ENCODE measurements at regions of chr16 and their contacts with region 1.

Region 1: GRCh38 chr16:50326949-50327402 is 41.8 kb downstream of the BRD7 start:
- H3K4me3 ChIP-seq: no peak overlapping the region
- H3K27ac ChIP-seq: no peak overlapping the region
- H3K4me1 ChIP-seq: no peaks in the 10 kb centered on the region
- CTCF ChIP-seq: 0 out of 2 replicates have a peak, but pooled peaks have one; percentile 12

Region 2: DNA sequence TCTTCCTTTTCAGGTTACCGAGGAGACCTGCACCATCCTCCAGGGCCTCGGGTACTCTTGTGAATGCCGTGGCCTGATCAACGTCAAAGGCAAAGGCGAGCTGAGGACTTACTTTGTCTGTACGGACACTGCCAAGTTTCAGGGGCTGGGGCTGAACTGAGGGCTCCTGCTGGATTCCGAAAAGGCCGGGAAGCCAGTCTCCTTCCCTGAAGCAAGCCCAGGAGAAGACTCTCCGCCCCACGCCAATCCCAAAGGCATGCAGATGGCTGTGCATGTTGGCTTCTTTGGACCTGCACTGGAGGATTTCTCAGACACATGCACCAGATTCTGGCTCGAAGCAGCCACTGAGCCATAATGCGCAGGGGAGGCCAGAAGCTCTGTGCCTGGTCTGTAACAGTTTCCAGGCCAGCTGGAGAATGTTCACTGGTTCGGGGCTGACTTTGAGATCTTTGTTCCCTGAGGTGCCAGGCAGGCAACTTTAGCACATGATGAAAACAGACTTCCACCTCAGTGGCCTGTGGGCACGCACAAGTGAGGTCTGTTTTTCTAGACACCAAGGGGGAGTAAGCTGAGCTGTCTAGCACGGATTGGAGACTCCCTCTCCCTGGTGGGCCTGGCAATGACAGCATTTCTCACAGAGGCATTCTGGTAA is 11.5 kb before region 1 on chr16:
- CTCF ChIA-PET with region 1: interaction called, 14 read pairs
- POLR2A ChIA-PET with region 1: no interaction called
- H3K4me3 ChIP-seq: no peak overlapping the region
- H3K27ac ChIP-seq: no peak overlapping the region
- H3K4me1 ChIP-seq: no peaks in the 10 kb centered on the region
- CTCF ChIP-seq: no peak

Region 3: DNA sequence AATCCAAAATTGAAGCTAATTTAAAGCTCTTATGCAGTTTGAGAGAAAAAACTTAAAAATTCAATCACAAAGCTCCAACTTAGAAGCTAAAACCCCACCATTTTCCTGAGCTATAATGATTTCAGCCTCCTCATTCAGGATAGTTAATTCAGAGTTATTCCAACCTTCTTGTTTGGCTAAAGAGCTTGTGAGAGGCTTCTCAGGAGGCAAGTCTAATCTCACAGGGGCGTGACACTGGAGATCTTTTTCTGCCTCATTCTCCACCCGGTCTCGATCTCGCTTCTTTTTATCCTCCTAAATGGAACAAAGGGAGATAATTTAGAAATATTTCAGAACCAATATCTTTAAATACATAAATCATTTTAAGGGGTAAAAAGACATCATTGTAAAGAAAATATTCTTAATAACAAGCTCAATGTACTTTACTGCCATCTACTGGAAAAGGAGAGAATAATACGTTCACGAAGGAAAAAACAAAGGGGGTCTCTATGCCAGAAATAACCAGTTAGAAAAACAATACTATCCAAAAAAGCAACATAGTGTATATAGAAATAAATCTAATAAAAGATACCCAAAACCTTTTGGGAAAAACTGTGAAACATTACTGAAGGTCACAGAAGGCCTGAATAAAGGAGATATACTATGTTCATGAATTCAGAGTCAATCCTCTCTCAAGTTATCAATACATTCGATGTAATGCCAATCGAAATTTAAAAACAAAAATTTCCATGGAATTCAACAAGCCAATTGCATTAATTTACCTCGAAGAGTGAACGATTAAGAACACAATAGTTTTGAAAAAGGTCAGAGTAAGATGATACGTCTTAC is 27.9 kb after region 1 on chr16:
- CTCF ChIA-PET with region 1: interaction called, 25 read pairs
- POLR2A ChIA-PET with region 1: no interaction called
- H3K4me3 ChIP-seq: no peak overlapping the region
- H3K27ac ChIP-seq: no peak overlapping the region
- H3K4me1 ChIP-seq: no peaks in the 10 kb centered on the region
- CTCF ChIP-seq: no peak